Activated naive CD4-positive, alpha-beta T cell treated with anti-CD3 and anti-CD28 coated beads, Interleukin-2, amount 10 ng/mL, durations not matched to agents 7 days and 5 days (primary cell): ENCODE measurements at regions of chr2 and their contacts with region 1.

Region 1: GRCh38 chr2:45578056-45578809 is 32.8 kb downstream of the SRBD1 start:
- DNase-seq: peak; percentile 48
- H3K4me3 Mint-ChIP-seq: no peak overlapping the region
- H3K27ac Mint-ChIP-seq: no peak overlapping the region
- H3K4me1 Mint-ChIP-seq: peaks cover 5% of the 10 kb centered on the region
- H3K27me3 Mint-ChIP-seq: no peaks in the 10 kb centered on the region

Region 2: DNA sequence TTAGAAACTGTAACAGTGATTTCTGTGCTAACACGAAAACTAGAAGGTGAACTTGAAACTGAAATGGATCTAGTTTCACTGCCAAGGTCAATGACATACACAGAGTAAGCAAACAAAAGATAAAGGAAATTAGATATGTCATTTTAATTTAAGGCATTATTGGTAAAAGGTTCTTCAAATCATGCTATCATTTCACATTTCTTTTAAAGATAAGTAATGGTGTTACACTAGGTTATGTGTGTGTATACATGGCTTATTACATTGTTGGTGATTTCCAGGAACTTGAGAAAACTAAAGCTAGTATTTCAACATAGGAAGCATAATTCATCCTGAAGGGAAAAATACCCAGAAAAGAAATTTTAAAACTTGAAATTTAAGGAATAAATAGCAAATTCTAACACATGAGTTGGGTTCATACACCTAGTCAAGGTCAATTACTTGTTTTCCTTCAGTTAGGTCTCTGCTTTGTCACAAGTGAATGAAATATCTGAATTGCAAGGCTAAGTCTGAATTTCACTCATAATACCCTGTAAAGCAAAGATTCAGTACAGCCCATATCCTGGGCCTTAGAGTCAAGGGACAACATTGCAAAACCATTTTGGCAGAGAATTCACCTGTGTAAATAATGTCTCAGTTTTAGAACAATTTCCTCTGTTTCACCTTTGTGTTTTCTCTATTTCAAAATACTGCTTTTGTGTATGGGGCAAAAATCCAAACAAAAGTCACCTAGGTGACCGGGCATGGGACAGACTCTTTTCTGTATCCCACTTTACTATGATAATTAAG is 108.7 kb before region 1 on chr2:
- CTCF ChIA-PET with region 1: no interaction called
- DNase-seq: no peak
- H3K4me3 Mint-ChIP-seq: no peak overlapping the region
- H3K27ac Mint-ChIP-seq: no peak overlapping the region
- H3K4me1 Mint-ChIP-seq: no peaks in the 10 kb centered on the region
- H3K27me3 Mint-ChIP-seq: no peaks in the 10 kb centered on the region

Region 3: GRCh38 chr2:45588158-45588829 is 10.1 kb after region 1 on chr2:
- CTCF ChIA-PET with region 1: interaction called, 11 read pairs
- DNase-seq: no peak
- H3K4me3 Mint-ChIP-seq: no peak overlapping the region
- H3K27ac Mint-ChIP-seq: peak overlapping the region; percentile 38
- H3K4me1 Mint-ChIP-seq: peaks cover 26% of the 10 kb centered on the region
- H3K27me3 Mint-ChIP-seq: no peaks in the 10 kb centered on the region